Activated CD4-positive, alpha-beta memory T cell treated with anti-CD3 and anti-CD28 coated beads for 36 hours (primary cell): ENCODE measurements at regions of chr1 and their contacts with region 1.

Region 1: GRCh38 chr1:101257500-101258325 is 20.9 kb downstream of the S1PR1 start:
- DNase-seq: peak; percentile 49
- H3K4me3 Mint-ChIP-seq: no peak overlapping the region
- H3K27ac Mint-ChIP-seq: peak overlapping the region; percentile 67
- H3K4me1 Mint-ChIP-seq: peaks cover 66% of the 10 kb centered on the region
- H3K27me3 Mint-ChIP-seq: no peaks in the 10 kb centered on the region

Region 2: DNA sequence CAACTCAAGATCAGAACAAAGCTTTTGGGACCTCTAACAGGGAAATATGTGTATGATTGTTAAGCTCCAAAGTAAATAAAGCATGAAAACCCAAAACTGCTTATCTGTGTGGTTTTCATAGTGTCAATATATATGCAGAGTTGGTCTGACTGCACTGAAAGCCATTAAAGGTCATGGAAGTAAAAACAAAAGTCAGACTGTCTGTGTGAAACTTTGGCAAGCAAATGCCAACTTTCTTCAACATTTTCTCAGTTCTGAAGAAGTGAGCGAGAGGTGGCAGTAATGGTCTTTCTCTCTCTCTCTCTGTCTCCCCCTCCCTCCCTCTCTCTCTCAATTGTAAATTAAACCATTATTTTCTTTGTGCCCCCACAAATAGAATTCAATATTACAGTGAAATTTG is 121.0 kb before region 1 on chr1:
- CTCF ChIA-PET with region 1: interaction called, 3 read pairs
- POLR2A ChIA-PET with region 1: no interaction called
- intact Hi-C with region 1: loop called (anchors 1 kb)
- DNase-seq: peak; percentile 31
- H3K4me3 Mint-ChIP-seq: peak overlapping the region; percentile 14
- H3K27ac Mint-ChIP-seq: peak overlapping the region; percentile 79
- H3K4me1 Mint-ChIP-seq: peaks cover 60% of the 10 kb centered on the region
- H3K27me3 Mint-ChIP-seq: no peaks in the 10 kb centered on the region

Region 3: GRCh38 chr1:101532377-101532776 is 274.7 kb after region 1 on chr1:
- CTCF ChIA-PET with region 1: no interaction called
- POLR2A ChIA-PET with region 1: no interaction called
- intact Hi-C with region 1: no loop called
- DNase-seq: no peak
- H3K4me3 Mint-ChIP-seq: no peak overlapping the region
- H3K27ac Mint-ChIP-seq: no peak overlapping the region
- H3K4me1 Mint-ChIP-seq: no peaks in the 10 kb centered on the region
- H3K27me3 Mint-ChIP-seq: peaks cover 8% of the 10 kb centered on the region